SK-MEL-5 (cell line): ENCODE measurements at regions of chr3 and their contacts with region 1.

Region 1: DNA sequence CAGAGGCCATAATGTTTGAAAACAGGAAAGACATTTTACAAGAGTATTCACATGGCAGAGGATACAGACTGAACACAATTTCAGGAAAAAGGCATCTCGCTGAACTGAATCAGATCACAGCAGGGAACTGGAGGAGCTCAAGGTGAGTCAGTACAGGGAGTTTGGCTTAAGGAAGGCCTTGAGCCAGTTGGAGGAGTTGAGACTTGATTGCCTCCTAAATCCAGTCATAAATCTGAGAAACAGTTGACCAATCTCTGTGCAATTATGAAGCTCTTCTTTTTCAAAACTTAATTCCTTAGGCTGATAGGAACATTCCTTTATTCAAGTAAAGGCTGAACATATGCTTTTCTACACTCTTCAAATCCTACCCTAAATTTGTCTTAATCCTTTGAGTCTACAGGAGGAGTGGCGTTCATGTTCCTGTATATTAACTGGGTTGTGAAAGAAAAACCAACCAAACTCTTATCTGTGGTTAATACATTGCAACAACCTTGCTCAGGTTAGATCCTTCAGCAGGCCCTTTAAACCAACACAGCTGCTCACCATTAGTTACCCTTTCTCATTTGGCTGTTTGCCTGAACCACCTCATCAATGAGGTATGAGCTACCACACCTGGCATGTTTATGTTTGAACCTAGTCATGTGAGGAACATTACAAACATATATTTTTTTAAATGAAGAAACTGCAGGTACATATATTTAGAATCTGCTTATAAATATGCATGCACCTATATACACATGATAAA is 404.1 kb upstream of the ATP11B start:
- DNase-seq: no peak

Region 2: GRCh38 chr3:182490596-182491491 is 101.6 kb after region 1 on chr3:
- in situ Hi-C with region 1: loop called (anchors 25 kb)
- DNase-seq: peak; percentile 73

Region 3: GRCh38 chr3:182650568-182651128 is 261.4 kb after region 1 on chr3:
- in situ Hi-C with region 1: no loop called
- DNase-seq: no peak